ENCODE measurements at regions of chr1 and their contacts with region 1.

Region 1: GRCh38 chr1:110338886-110339406 is at the start of gene RBM15:
- DNase-seq: peak; percentile 77 to 100 (median 99)
- ATAC-seq: peak; percentile 84
- H3K4me3 ChIP-seq: peak within 1 kb of the TSS; percentile 94
- H3K4me3 Mint-ChIP-seq: no peak within 1 kb of the TSS
- H3K27ac ChIP-seq: peak within 1 kb of the TSS; percentile 96
- H3K27ac Mint-ChIP-seq: peak within 1 kb of the TSS in 1 of 9 donors; percentile 97
- H3K4me1 ChIP-seq: peaks cover 40 to 41% of the 10 kb centered on the region in 2 donors
- H3K4me1 Mint-ChIP-seq: peaks cover 37 to 64% (median 61%) of the 10 kb centered on the region in 7 donors
- H3K27me3 ChIP-seq: no peaks in the 10 kb centered on the region
- H3K27me3 Mint-ChIP-seq: peaks cover 0 to 2% (median 0%) of the 10 kb centered on the region in 5 donors
- total RNA-seq, gene RBM15: 36.4 to 58.6 (median 46.3) TPM

Region 2: DNA sequence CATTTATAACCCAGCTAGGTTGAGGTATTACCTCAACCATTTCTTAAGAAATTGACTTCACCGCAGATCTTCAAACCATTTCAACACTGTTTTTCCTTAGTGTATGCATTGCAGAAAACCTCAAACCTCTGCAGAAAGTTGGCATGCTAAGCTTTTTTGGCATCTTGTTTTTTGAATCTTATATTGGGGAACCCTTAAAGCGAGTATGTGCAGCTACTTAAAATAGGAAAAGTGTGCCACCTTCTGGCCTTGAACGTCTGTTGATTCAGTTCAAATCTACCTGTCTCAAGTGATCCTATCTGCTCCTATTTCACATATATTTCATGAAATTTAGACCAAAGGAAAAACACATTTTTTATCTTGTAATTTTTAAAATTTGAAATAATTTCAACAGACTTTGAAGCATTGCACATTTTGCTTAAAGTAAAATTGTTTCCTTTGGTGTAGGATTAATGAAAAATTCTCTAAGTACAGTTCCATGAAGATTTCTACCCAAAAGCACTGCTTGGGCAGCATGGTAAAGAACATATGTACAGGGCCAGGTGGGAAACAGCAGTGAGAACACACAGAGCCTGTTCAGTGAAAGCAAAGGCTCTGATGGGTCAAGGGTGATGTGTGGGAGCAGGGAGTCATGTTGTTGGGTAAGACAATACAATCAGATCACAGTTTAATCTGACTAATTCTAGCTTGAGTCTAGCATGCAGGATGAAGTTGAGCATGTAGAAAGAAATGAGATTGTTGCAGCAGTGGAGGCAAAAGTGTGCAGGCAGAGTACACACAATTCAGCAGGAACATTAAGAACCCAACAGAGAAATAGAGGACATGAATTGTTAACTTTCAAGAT is 1695.2 kb before region 1 on chr1:
- CTCF ChIA-PET with region 1: no interaction called
- POLR2A ChIA-PET with region 1: no interaction called
- intact Hi-C with region 1: loop called in 1 of 2 experiments (anchors 10 kb)
- DNase-seq: peak in 7 of 9 donors; percentile 59 to 78 (median 67)
- ATAC-seq: peak; percentile 45
- H3K4me3 ChIP-seq: no peak overlapping the region
- H3K4me3 Mint-ChIP-seq: peak overlapping the region in 9 of 10 donors; percentile 4 to 70 (median 47)
- H3K27ac ChIP-seq: peak overlapping the region; percentile 71
- H3K27ac Mint-ChIP-seq: peak overlapping the region; percentile 68 to 100 (median 98)
- H3K4me1 ChIP-seq: peaks cover 49 to 52% of the 10 kb centered on the region in 2 donors
- H3K4me1 Mint-ChIP-seq: peaks cover 55 to 81% (median 75%) of the 10 kb centered on the region in 7 donors
- H3K27me3 ChIP-seq: no peaks in the 10 kb centered on the region
- H3K27me3 Mint-ChIP-seq: no peaks in the 10 kb centered on the region

Region 3: DNA sequence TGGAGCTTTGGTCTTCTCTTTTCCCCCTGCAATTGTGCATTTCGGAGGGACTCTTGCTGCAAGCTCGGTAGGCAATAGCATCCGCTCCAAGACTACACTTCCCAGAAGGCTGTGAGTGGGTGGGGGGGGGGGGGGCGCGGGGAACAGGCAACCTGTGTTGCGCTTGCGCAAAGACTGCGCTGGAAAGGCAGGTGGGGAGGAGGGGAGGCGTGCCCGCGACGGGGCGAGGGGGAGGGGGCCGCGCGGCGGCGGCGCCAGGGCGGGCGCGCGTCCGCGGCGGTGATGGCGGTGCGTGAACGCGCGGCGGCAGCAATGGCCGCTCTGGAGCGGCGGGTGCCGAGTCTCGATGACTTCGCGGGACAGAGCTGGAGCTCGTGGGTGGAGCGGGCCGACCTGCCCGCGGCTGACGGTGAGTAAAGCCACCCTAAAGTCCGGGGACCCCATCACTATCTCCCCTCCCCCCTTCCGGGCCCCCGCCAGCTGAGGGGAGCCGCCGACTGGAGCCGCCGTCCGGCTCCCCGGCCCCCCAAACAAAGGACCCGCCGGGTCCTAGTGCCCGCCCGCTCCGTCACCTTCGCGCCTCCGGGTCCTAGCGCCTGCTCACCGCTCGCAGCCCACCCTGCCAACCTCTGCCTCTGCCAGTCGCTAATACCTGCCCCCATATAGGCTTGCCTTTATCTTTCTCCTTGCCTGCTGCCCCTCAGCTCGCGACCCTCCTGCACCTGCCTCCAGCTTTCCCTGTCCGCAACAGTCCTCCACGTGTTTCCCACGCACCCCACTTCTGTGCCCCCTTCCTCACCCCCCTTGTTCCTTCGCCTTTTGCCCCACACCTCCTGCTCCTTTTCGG is 855.1 kb before region 1 on chr1 and contains the start of gene ATXN7L2:
- CTCF ChIA-PET with region 1: no interaction called
- POLR2A ChIA-PET with region 1: no interaction called
- intact Hi-C with region 1: loop called in 1 of 2 experiments (anchors 1 kb)
- DNase-seq: peak; percentile 89 to 95 (median 93)
- ATAC-seq: peak; percentile 91
- H3K4me3 ChIP-seq: peak within 1 kb of the TSS; percentile 98
- H3K4me3 Mint-ChIP-seq: peak within 1 kb of the TSS; percentile 93 to 99 (median 96)
- H3K27ac ChIP-seq: peak within 1 kb of the TSS; percentile 88
- H3K27ac Mint-ChIP-seq: peak within 1 kb of the TSS; percentile 83 to 97 (median 92)
- H3K4me1 ChIP-seq: peaks cover 9 to 14% of the 10 kb centered on the region in 2 donors
- H3K4me1 Mint-ChIP-seq: peaks cover 27 to 44% (median 35%) of the 10 kb centered on the region in 7 donors
- H3K27me3 ChIP-seq: no peaks in the 10 kb centered on the region
- H3K27me3 Mint-ChIP-seq: peaks cover 0 to 23% (median under 1%) of the 10 kb centered on the region in 5 donors
- total RNA-seq, gene ATXN7L2: 10.5 to 12.8 (median 11.7) TPM

Region 4: DNA sequence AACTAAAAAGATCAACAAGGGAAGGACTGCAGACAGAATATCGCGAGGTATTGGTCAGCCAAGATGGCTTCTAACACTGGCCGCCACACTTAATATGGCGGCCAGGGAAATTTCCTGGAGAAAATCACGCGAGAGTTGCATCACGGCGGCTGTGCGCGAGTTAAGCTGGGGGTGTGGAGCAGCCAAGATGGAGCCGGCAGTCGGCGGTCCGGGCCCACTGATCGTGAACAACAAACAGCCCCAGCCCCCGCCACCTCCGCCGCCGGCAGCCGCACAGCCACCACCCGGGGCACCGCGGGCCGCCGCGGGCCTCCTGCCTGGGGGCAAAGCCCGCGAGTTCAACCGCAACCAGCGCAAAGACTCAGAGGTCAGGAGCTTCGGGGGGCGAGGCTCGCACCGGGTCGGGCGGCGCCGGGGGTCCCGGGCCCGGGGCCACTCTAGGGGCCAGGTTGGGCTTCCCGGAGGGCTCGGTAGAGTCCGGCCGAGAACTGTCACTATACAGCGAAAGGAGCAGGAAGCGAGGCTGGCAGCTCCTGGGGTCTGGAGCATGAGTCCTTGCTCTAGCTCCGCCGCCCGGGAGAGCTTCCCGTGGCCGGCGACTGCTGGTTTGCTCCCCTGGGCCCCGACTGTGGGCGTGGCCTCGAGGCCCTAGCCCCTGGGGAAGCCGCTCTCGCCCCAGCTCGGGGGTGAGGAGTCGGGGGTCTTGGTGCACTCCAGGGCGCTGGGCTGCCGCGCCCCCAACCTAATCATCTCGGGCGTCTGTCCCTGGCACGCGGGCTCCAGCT is 304.3 kb before region 1 on chr1 and contains the start of gene STRIP1:
- CTCF ChIA-PET with region 1: interaction called, 4 read pairs
- POLR2A ChIA-PET with region 1: interaction called, 31 read pairs
- intact Hi-C with region 1: loop called (anchors 1 kb)
- DNase-seq: peak; percentile 78 to 96 (median 93)
- ATAC-seq: peak; percentile 97
- H3K4me3 ChIP-seq: peak within 1 kb of the TSS; percentile 48
- H3K4me3 Mint-ChIP-seq: peak within 1 kb of the TSS; percentile 92 to 98 (median 95)
- H3K27ac ChIP-seq: peak within 1 kb of the TSS; percentile 97
- H3K27ac Mint-ChIP-seq: peak within 1 kb of the TSS; percentile 81 to 98 (median 95)
- H3K4me1 ChIP-seq: peaks cover 31% of the 10 kb centered on the region in 2 donors
- H3K4me1 Mint-ChIP-seq: peaks cover 32 to 70% (median 57%) of the 10 kb centered on the region in 7 donors
- H3K27me3 ChIP-seq: no peaks in the 10 kb centered on the region
- H3K27me3 Mint-ChIP-seq: no peaks in the 10 kb centered on the region
- total RNA-seq, gene STRIP1: 42.4 to 83.9 (median 70.7) TPM

Region 5: DNA sequence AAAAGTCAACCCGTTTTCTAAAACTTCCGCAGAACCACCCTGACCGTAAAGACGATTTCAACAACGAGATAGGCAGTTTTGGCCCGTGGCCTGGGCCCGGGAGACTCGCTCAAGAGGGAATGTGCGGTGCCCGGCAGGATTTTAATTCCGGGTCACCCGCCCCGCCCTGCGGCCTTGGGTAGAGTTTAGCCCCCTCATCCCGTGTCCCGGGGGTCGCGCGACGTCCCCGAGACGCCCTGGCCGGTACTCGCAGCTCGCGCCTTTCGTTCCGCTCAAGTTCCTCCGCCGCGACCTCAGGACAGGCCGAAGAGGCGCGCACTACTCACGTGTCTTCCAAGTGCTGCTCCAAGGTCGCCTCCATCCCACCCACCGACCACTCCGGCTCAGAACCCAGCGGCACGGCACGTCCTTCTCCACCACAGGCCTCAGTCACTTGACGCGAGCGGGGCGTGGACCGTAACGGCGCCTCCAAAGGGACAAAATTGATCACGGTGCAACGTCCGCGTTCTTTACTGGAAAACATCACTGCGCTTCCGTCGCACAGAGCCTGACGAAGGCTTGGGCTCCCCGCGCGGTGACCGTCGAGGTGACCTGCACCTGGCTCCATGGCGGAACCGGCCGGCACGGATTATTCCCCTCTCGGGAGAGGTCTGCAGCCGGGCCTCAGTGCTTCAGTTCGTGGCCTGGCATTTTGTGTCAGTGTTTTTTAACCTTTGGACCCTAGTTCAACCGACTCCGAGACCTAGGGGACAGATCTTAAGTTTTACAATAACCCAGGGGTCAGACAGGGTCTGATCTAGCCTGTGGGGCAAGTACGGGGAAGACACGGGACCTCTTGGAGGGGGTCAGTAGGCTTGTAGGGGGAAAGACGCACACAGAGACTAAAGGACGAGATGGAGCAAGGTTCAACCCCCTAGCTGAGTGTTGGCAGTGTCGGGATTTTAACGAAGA is 68.6 kb after region 1 on chr1 and contains the start of gene LAMTOR5:
- CTCF ChIA-PET with region 1: interaction called, 14 read pairs
- POLR2A ChIA-PET with region 1: interaction called, 64 read pairs
- intact Hi-C with region 1: loop called (anchors 1 kb)
- DNase-seq: peak; percentile 77 to 91 (median 89)
- ATAC-seq: peak; percentile 98
- H3K4me3 ChIP-seq: peak within 1 kb of the TSS; percentile 95
- H3K4me3 Mint-ChIP-seq: peak within 1 kb of the TSS; percentile 88 to 100 (median 99)
- H3K27ac ChIP-seq: peak within 1 kb of the TSS; percentile 92
- H3K27ac Mint-ChIP-seq: peak within 1 kb of the TSS; percentile 96 to 100 (median 99)
- H3K4me1 ChIP-seq: peaks cover 19% of the 10 kb centered on the region in 2 donors
- H3K4me1 Mint-ChIP-seq: peaks cover 9 to 39% (median 27%) of the 10 kb centered on the region in 7 donors
- H3K27me3 ChIP-seq: no peaks in the 10 kb centered on the region
- H3K27me3 Mint-ChIP-seq: no peaks in the 10 kb centered on the region
- total RNA-seq, gene LAMTOR5: 63.3 to 146 (median 69.4) TPM

Region 6: DNA sequence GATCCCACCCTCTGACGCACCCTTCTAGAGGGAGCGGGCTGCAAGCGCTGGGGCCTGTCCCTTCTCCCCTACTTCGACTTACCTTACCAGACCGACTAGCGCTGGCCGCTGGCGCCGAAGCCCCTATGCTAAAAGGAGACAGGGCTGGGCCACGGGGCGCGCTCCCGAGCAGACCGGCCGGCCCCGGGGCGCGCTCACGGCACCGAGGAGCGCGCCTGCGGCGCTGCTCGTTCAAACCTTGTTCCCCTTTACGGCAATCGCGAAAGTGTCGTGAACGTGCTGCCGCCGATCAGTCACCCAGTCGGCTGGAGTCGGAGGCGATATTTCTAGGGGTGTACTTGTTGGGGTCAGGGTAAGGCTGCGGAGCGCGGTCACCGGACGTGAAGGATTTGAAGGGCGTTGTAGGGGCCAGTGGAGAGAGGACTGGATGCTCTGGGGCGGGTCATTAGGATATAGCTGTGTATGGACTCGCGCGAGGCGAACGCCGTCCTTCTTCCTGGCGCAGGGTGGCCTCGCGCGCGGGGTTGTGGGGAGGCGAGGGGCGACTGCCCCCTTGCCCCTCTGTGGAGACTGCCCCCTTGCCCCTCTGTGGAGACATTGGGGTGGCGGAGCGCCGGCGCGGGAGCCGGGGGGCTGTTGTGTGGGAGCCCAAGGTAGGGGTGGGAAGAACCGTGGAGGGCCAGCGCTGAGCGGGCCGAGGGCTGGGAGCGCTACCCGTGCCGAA is 801.2 kb after region 1 on chr1 and contains the starts of genes CEPT1 and DRAM2:
- CTCF ChIA-PET with region 1: no interaction called
- POLR2A ChIA-PET with region 1: no interaction called
- intact Hi-C with region 1: loop called in 1 of 2 experiments (anchors 5 kb)
- DNase-seq: peak; percentile 77 to 93 (median 89)
- ATAC-seq: peak; percentile 95
- H3K4me3 ChIP-seq: peak within 1 kb of the TSS; percentile 91
- H3K4me3 Mint-ChIP-seq: peak within 1 kb of the TSS; percentile 87 to 100 (median 98)
- H3K27ac ChIP-seq: peak within 1 kb of the TSS; percentile 93
- H3K27ac Mint-ChIP-seq: peak within 1 kb of the TSS; percentile 91 to 100 (median 97)
- H3K4me1 ChIP-seq: peaks cover 18 to 22% of the 10 kb centered on the region in 2 donors
- H3K4me1 Mint-ChIP-seq: peaks cover 40 to 75% (median 57%) of the 10 kb centered on the region in 7 donors
- H3K27me3 ChIP-seq: no peaks in the 10 kb centered on the region
- H3K27me3 Mint-ChIP-seq: no peaks in the 10 kb centered on the region
- total RNA-seq, gene CEPT1: 39.1 to 57.5 (median 40.2) TPM
- total RNA-seq, gene DRAM2: 26.9 to 51.6 (median 43.5) TPM

Region 7: DNA sequence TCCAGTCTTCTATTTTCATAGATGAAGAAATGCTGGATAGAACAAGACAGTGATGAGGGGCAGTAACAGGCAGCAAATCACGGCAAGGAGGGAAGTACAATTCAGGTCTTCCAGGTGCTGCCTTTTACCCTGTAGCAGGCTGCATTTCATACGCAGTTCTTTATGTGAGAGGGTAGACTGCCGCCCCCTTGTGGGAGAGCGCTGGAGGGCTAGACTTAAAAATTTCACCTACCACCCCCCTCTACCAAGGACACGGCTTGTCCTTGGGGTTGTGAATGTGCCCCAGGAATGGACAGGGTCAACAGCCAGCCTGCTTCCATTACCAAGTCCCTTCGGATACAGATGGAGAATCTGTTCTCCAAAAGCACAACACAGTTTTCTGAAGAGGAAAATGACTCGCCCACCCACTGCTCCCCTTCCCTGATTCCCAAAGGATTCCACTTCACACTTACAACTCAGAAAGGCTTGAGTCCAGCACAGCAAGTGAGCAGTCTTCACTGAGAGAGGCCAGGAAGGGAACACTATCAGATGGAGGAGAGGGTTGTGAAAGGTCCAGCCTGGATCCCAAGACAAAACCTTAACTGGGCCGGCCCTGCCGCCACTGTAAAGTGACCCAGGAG is 1102.7 kb after region 1 on chr1:
- CTCF ChIA-PET with region 1: no interaction called
- POLR2A ChIA-PET with region 1: no interaction called
- intact Hi-C with region 1: no loop called
- DNase-seq: peak; percentile 44 to 75 (median 67)
- ATAC-seq: peak; percentile 95
- H3K4me3 ChIP-seq: no peak overlapping the region
- H3K4me3 Mint-ChIP-seq: no peak overlapping the region
- H3K27ac ChIP-seq: peak overlapping the region; percentile 47
- H3K27ac Mint-ChIP-seq: peak overlapping the region in 8 of 9 donors; percentile 49 to 90 (median 84)
- H3K4me1 ChIP-seq: peaks cover 4 to 7% of the 10 kb centered on the region in 2 donors
- H3K4me1 Mint-ChIP-seq: peaks cover 8 to 49% (median 34%) of the 10 kb centered on the region in 7 donors
- H3K27me3 ChIP-seq: no peaks in the 10 kb centered on the region
- H3K27me3 Mint-ChIP-seq: no peaks in the 10 kb centered on the region